ENCODE measurements at regions of chr17 and their contacts with region 1.

Region 1: GRCh38 chr17:65572581-65573281 is 11.3 kb upstream of the AXIN2 start:
- DNase-seq: peak; percentile 85 to 96
- H3K4me3 ChIP-seq: peak overlapping the region in 3 of 4 experiments; percentile 8 to 43 (median 20); a peak in 4 of 8 replicates
- H3K27ac ChIP-seq: peak overlapping the region; percentile 93
- H3K4me1 ChIP-seq: peaks cover 10 to 22% (median 15%) of the 10 kb centered on the region in 4 experiments
- H3K27me3 ChIP-seq: no peaks in the 10 kb centered on the region
- CTCF ChIP-seq: no peak
- EP300 ChIP-seq: peak in 1 of 2 experiments; percentile 93; a peak in 1 of 3 replicates
- POLR2A ChIP-seq: peak; percentile 32 to 72; a peak in 2 of 3 replicates
- RAD21 ChIP-seq: no peak; a peak in 1 of 4 replicates

Region 2: GRCh38 chr17:65588176-65588808 is 15.6 kb after region 1 on chr17:
- CTCF ChIA-PET with region 1: interaction called, 24 read pairs
- POLR2A ChIA-PET with region 1: interaction called, 26 read pairs
- DNase-seq: no peak
- H3K4me3 ChIP-seq: no peak overlapping the region
- H3K27ac ChIP-seq: no peak overlapping the region
- H3K4me1 ChIP-seq: peaks cover 4 to 19% (median 12%) of the 10 kb centered on the region in 4 experiments
- H3K27me3 ChIP-seq: no peaks in the 10 kb centered on the region
- CTCF ChIP-seq: peak; percentile 2 to 49 (median 36)
- EP300 ChIP-seq: no peak
- POLR2A ChIP-seq: no peak
- RAD21 ChIP-seq: peak; percentile 22 to 39; a peak in 3 of 4 replicates